ENCODE measurements at regions of chr2 and their contacts with region 1.

Region 1: GRCh38 chr2:112187805-112188596 is 49.8 kb downstream of the FBLN7 start:
- DNase-seq: no peak
- ATAC-seq: peak; percentile 84
- H3K4me3 Mint-ChIP-seq: peak overlapping the region; percentile 26
- H3K27ac Mint-ChIP-seq: peak overlapping the region; percentile 81
- H3K4me1 Mint-ChIP-seq: peaks cover 19% of the 10 kb centered on the region
- H3K27me3 Mint-ChIP-seq: no peaks in the 10 kb centered on the region
- CTCF ChIP-seq: no peak

Region 2: GRCh38 chr2:112054847-112055729 is 132.9 kb before region 1 on chr2 and contains the start of gene TMEM87B:
- CTCF ChIA-PET with region 1: no interaction called
- POLR2A ChIA-PET with region 1: no interaction called
- intact Hi-C with region 1: no loop called
- DNase-seq: peak; percentile 87
- ATAC-seq: peak; percentile 72
- H3K4me3 Mint-ChIP-seq: peak within 1 kb of the TSS; percentile 96
- H3K27ac Mint-ChIP-seq: peak within 1 kb of the TSS; percentile 97
- H3K4me1 Mint-ChIP-seq: peaks cover 39% of the 10 kb centered on the region
- H3K27me3 Mint-ChIP-seq: no peaks in the 10 kb centered on the region
- CTCF ChIP-seq: no peak
- total RNA-seq, gene TMEM87B: 19.8 and 20.0 TPM in 2 replicates

Region 3: DNA sequence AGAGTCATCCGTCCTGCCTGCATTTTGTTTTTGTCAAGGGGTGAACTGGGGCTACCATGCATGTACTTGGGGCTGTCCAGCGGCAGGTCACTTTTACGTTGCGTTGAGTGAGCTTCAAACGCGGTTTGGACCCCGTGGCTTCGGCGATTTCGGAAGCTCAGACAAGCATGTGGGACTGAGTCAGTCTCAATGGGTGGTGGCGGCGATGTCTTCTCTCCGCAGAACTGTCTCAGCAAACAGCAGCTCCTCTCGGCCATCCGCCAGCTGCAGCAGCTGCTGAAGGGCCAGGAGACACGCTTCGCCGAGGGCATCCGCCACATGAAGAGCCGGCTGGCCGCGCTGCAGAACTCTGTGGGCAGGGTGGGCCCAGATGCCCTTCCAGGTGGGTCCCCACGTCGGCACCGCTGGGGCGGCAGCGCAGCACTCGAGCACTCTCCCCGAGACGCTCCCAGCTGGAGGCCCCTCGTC is 28.5 kb before region 1 on chr2:
- CTCF ChIA-PET with region 1: no interaction called
- POLR2A ChIA-PET with region 1: no interaction called
- intact Hi-C with region 1: loop called (anchors 2 kb)
- DNase-seq: peak; percentile 34
- ATAC-seq: peak; percentile 76
- H3K4me3 Mint-ChIP-seq: peak overlapping the region; percentile 65
- H3K27ac Mint-ChIP-seq: peak overlapping the region; percentile 88
- H3K4me1 Mint-ChIP-seq: peaks cover 39% of the 10 kb centered on the region
- H3K27me3 Mint-ChIP-seq: no peaks in the 10 kb centered on the region
- CTCF ChIP-seq: no peak

Measured in activated B cell treated with CpG ODN at 0.5 μM for 24 hours (primary cell).